ENCODE measurements at regions of chr17 and their contacts with region 1.

Region 1: GRCh38 chr17:4903051-4903818 is at the start of gene CHRNE:
- DNase-seq: peak; percentile 80
- ATAC-seq: peak; percentile 57
- H3K4me3 ChIP-seq: no peak within 1 kb of the TSS
- H3K27ac ChIP-seq: no peak within 1 kb of the TSS
- H3K4me1 ChIP-seq: peaks cover 37% of the 10 kb centered on the region
- H3K27me3 ChIP-seq: no peaks in the 10 kb centered on the region
- CTCF ChIP-seq: peak; percentile 86
- EP300 ChIP-seq: no peak
- POLR2A ChIP-seq: no peak
- RAD21 ChIP-seq: no peak
- total RNA-seq, gene CHRNE: 0.25 and 0.53 TPM in 2 replicates

Region 2: DNA sequence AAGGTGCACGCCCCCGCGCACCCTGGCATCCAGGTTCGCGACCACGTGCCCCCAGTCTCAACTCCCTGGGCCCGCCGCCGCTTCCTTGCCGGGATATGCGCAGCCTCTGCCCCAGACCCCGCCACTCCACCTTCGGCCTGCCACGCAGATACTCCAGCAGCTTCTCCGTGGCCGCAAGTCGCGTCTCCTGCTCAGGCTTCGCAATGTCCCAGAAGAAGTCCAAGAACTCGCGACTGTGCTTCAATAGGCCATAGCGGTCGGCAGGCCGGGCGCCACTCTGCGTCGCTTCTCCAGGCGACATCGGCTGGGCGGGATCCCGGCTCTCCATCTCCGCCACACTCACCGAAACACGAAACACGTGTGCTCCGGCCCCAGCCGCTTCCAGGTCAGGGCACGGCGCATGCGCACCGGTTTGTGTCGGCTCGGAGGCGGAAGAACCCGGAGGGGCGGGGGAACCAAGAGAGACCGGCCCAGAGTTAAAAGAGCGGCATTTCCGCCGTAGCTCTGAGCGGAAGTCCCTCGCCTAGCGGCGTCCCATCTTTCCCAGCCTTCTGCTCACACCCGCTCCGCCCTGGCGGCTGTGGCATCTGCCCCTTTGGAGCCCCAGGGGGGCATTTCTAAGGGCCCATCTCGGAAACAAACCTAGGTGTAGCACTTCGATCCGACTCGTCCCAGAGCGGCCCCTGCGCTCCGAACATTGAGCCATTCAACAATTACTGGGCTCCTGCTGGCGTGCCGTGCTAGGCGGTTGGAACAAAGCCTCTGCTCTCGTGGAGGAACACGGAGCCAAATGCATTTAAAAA is 348.0 kb before region 1 on chr17 and contains the start of gene MYBBP1A:
- CTCF ChIA-PET with region 1: no interaction called
- POLR2A ChIA-PET with region 1: no interaction called
- in situ Hi-C with region 1: loop called (anchors 10 kb)
- intact Hi-C with region 1: no loop called
- DNase-seq: peak; percentile 92
- ATAC-seq: peak; percentile 91
- H3K4me3 ChIP-seq: peak within 1 kb of the TSS; percentile 56 to 95 (median 87)
- H3K27ac ChIP-seq: peak within 1 kb of the TSS; percentile 69
- H3K4me1 ChIP-seq: peaks cover 43% of the 10 kb centered on the region
- H3K27me3 ChIP-seq: no peaks in the 10 kb centered on the region
- CTCF ChIP-seq: peak; percentile 36; the same call in 1 of the 2 replicates
- EP300 ChIP-seq: no peak
- POLR2A ChIP-seq: peak; percentile 78 to 92
- RAD21 ChIP-seq: no peak
- total RNA-seq, gene MYBBP1A: 40.4 and 54.8 TPM in 2 replicates

Region 3: GRCh38 chr17:5050278-5050677 is 147.0 kb after region 1 on chr17:
- CTCF ChIA-PET with region 1: no interaction called
- POLR2A ChIA-PET with region 1: no interaction called
- in situ Hi-C with region 1: loop called (anchors 10 kb)
- intact Hi-C with region 1: no loop called
- DNase-seq: no peak
- ATAC-seq: no peak
- H3K4me3 ChIP-seq: no peak overlapping the region
- H3K27ac ChIP-seq: no peak overlapping the region
- H3K4me1 ChIP-seq: peaks cover 22% of the 10 kb centered on the region
- H3K27me3 ChIP-seq: no peaks in the 10 kb centered on the region; a peak in 1 of 5 replicates
- CTCF ChIP-seq: no peak
- EP300 ChIP-seq: no peak
- POLR2A ChIP-seq: no peak
- RAD21 ChIP-seq: no peak

Measured in HepG2 (cell line).